MCF 10A (cell line): ENCODE measurements at regions of chr10 and their contacts with region 1.

Region 1: GRCh38 chr10:13099666-13100348 is at the start of gene OPTN:
- DNase-seq: peak; percentile 81
- H3K4me3 Mint-ChIP-seq: peak within 1 kb of the TSS; percentile 83
- H3K27ac Mint-ChIP-seq: peak within 1 kb of the TSS; percentile 87
- H3K4me1 Mint-ChIP-seq: peaks cover 26% of the 10 kb centered on the region
- H3K27me3 Mint-ChIP-seq: no peaks in the 10 kb centered on the region
- CTCF ChIP-seq: peak; percentile 75
- total RNA-seq, gene OPTN: 79.6 and 109 TPM in 2 replicates

Region 2: DNA sequence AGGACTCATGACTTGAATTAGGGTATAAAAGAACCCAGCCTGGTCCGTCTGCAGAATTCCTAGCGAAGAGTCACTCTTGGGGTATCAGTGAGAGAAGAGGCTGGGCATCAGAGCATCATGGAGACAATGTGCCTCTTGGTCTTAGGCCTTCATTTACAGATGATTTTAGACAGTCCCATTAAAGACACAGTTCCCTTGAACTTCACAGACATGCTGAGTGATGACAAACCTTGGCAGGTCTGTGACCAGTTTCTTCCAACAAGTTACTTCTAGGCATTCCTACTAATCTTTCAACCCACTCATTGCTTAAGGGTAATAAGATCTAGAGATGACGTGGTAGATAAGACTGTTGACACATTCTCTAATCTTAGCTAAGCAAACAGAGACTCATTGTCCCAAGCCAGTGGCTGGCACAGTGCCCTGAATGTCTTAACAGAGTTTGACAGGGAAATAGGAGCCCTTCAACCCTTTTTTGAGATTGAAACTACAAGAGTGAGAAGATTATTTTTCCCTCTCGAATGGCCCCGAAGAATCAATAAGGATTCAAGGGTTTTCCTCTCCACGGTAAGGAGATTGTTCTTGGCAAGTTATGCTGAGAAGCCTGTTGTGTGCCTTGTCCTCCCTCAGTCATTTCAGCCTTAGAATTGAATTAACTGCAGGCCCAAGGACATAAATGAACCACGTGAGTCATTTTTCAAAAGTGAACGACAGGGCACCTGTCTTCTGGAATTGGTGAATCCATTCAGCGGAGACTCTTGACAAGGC is 379.4 kb before region 1 on chr10:
- CTCF ChIA-PET with region 1: interaction called, 4 read pairs
- POLR2A ChIA-PET with region 1: interaction called, 6 read pairs
- intact Hi-C with region 1: loop called (anchors 1 kb)
- DNase-seq: peak; percentile 98
- H3K4me3 Mint-ChIP-seq: peak overlapping the region; percentile 43
- H3K27ac Mint-ChIP-seq: peak overlapping the region; percentile 79
- H3K4me1 Mint-ChIP-seq: peaks cover 26% of the 10 kb centered on the region
- H3K27me3 Mint-ChIP-seq: no peaks in the 10 kb centered on the region
- CTCF ChIP-seq: no peak

Region 3: GRCh38 chr10:12890958-12891357 is 208.8 kb before region 1 on chr10:
- CTCF ChIA-PET with region 1: no interaction called
- POLR2A ChIA-PET with region 1: no interaction called
- intact Hi-C with region 1: no loop called
- DNase-seq: no peak
- H3K4me3 Mint-ChIP-seq: no peak overlapping the region
- H3K27ac Mint-ChIP-seq: no peak overlapping the region
- H3K4me1 Mint-ChIP-seq: no peaks in the 10 kb centered on the region
- H3K27me3 Mint-ChIP-seq: peaks cover 12% of the 10 kb centered on the region
- CTCF ChIP-seq: no peak

Region 4: DNA sequence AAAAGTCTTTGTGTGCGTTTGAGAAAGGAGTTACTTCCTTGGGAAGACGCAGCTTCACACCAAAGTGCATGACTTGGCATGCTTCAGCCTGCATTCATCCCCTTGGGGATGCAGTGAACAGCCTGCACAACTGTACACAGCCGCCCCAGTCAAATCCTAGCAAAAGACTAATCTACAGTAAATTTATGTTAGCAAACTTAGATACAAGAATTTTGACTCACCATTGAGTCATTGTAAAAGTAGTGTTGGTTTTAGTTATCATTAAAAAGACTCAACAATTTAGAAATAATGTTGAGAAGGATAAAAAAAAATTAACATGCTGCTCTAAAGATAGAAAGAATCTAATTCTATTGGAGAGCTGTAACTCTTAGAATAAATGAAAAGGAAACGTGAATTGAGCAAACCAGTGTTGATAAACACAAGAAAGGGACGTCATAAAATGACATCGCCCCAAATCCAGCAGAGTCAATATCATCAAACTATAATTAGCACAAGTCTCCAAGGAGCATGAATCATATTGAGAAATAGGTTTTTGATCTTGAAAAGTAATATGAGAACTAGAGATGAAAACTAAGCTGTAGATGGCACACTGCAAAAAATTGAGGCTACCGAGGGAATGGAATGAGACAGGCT is 11.7 kb before region 1 on chr10:
- CTCF ChIA-PET with region 1: interaction called, 13 read pairs
- POLR2A ChIA-PET with region 1: interaction called, 11 read pairs
- intact Hi-C with region 1: no loop called
- DNase-seq: peak; percentile 49
- H3K4me3 Mint-ChIP-seq: no peak overlapping the region
- H3K27ac Mint-ChIP-seq: no peak overlapping the region
- H3K4me1 Mint-ChIP-seq: peaks cover 12% of the 10 kb centered on the region
- H3K27me3 Mint-ChIP-seq: no peaks in the 10 kb centered on the region
- CTCF ChIP-seq: no peak